Dorsolateral prefrontal cortex (tissue), 120 donors: ENCODE measurements at regions of chr20 and their contacts with region 1.

Region 1: GRCh38 chr20:35207950-35208611 is 18.4 kb upstream of the MMP24 start:
- DNase-seq: peak in 9 of 10 donors; percentile 48 to 84 (median 74)
- H3K4me3 ChIP-seq: peak overlapping the region in 7 of 59 donors; percentile 2 to 28 (median 10)
- H3K27ac ChIP-seq: peak overlapping the region in 48 of 59 donors; percentile 1 to 88 (median 55)
- H3K27me3 ChIP-seq: no peaks in the 10 kb centered on the region
- CTCF ChIP-seq: peak; percentile 63 to 91 (median 84)

Region 2: DNA sequence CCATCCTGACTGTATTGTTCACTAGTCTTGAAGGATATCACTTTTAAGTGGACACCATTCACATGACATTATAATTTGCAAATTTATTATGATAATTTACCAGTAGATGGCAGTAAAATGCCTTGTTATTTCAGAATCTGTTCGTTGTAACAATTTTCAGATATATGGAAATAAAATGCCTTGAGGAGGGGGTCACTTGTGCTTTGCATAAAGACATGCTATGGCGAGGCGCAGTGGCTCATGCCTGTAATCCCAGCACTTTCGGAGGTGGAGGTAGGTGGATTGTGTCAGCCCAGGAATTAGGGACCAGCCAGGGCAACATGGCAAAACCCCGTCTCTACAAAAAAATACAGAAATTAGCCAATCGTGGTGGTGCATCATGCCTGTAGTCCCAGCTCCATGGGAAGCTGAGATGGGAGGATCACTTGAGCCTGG is 373.6 kb before region 1 on chr20:
- intact Hi-C with region 1: loop called in 1 of 2 experiments (anchors 2 kb)
- DNase-seq: no peak
- H3K4me3 ChIP-seq: peak overlapping the region in 42 of 59 donors; percentile 1 to 55 (median 32)
- H3K27ac ChIP-seq: peak overlapping the region in 3 of 59 donors; percentile 18 to 59 (median 45)
- H3K27me3 ChIP-seq: no peaks in the 10 kb centered on the region
- CTCF ChIP-seq: peak; percentile 33 to 78 (median 59)

Region 3: DNA sequence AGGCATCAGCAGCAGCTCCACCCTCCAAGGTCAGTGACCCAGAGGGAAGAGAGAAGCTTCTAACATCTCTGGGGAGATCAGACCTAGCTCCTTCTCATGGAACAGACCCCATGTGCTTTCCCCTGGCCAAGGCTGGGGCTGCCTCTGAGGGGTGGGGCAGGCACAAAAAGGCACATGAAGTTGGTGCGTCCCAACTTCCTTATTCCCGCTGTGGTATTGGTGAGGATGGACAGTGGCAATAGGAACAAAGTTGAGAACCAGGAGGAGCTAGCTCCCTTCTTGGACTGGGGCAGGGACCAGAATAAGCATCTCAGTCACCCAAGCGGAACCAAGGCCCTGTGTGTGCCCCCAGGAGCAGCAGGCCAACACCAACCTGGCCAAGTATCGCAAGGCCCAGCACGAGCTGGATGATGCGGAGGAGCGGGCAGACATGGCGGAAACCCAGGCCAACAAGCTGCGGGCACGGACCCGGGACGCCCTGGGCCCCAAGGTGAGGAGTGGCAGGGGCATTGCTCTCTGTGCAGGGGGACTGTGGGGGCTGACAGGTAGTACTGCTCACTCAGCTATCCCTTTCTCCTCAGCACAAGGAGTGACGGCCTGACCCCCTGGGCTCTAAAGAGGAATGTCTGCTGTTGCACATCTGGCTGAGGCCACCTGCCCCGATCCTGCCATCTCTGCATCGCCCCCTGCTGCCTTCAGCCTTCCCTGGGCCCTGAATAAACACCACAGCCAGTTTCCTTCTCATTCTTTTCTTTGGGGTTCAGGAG is 206.3 kb before region 1 on chr20:
- intact Hi-C with region 1: no loop called
- DNase-seq: no peak
- H3K4me3 ChIP-seq: no peak overlapping the region
- H3K27ac ChIP-seq: peak overlapping the region in 26 of 59 donors; percentile 8 to 91 (median 44)
- H3K27me3 ChIP-seq: no peaks in the 10 kb centered on the region
- CTCF ChIP-seq: no peak